ENCODE measurements at regions of chr10 and their contacts with region 1.

Region 1: GRCh38 chr10:101569838-101570766 is 18.0 kb downstream of the POLL start:
- DNase-seq: peak; percentile 86
- H3K4me3 Mint-ChIP-seq: peak overlapping the region; percentile 74
- H3K27ac Mint-ChIP-seq: no peak overlapping the region
- H3K4me1 Mint-ChIP-seq: peaks cover 20% of the 10 kb centered on the region
- H3K27me3 Mint-ChIP-seq: peaks cover 73% of the 10 kb centered on the region

Region 2: GRCh38 chr10:101214446-101215396 is 355.4 kb before region 1 on chr10:
- CTCF ChIA-PET with region 1: interaction called, 40 read pairs
- DNase-seq: peak; percentile 80
- H3K4me3 Mint-ChIP-seq: peak overlapping the region; percentile 33
- H3K27ac Mint-ChIP-seq: peak overlapping the region; percentile 1
- H3K4me1 Mint-ChIP-seq: peaks cover 35% of the 10 kb centered on the region
- H3K27me3 Mint-ChIP-seq: peaks cover 100% of the 10 kb centered on the region

Region 3: DNA sequence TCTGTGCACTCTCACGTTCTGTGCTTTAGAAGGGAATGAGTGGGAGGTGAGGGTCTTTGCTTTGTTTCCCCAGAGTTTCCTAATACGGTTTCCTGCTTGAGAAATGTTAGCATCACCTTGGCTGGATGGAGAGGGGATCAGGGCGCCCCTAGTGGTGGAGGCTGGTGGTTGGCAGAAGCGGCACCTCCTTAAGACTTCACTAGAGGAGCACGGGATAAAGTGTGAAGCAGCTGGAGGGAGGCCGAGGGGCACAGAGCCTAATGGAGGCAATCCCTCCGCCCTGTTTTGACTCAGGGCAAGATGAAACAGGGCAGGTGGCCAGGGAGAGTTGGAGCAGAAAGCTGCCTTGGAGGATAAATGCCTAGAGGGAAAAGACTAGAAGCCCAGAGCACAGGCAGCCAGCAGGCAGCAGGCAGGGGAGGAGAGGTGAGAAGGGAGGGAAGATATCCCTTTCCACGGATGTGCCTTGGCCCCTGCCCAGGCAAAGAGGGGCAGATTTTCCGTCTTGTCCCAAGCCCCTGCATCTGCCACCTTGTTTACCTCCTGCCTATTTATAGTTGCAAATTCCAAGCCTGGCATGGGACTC is 272.1 kb before region 1 on chr10:
- CTCF ChIA-PET with region 1: interaction called, 20 read pairs
- DNase-seq: peak; percentile 85
- H3K4me3 Mint-ChIP-seq: no peak overlapping the region
- H3K27ac Mint-ChIP-seq: no peak overlapping the region
- H3K4me1 Mint-ChIP-seq: no peaks in the 10 kb centered on the region
- H3K27me3 Mint-ChIP-seq: peaks cover 90% of the 10 kb centered on the region

Region 4: GRCh38 chr10:101536800-101537199 is 33.3 kb before region 1 on chr10:
- CTCF ChIA-PET with region 1: interaction called, 18 read pairs
- DNase-seq: no peak
- H3K4me3 Mint-ChIP-seq: no peak overlapping the region
- H3K27ac Mint-ChIP-seq: no peak overlapping the region
- H3K4me1 Mint-ChIP-seq: peaks cover 5% of the 10 kb centered on the region
- H3K27me3 Mint-ChIP-seq: no peaks in the 10 kb centered on the region

Region 5: DNA sequence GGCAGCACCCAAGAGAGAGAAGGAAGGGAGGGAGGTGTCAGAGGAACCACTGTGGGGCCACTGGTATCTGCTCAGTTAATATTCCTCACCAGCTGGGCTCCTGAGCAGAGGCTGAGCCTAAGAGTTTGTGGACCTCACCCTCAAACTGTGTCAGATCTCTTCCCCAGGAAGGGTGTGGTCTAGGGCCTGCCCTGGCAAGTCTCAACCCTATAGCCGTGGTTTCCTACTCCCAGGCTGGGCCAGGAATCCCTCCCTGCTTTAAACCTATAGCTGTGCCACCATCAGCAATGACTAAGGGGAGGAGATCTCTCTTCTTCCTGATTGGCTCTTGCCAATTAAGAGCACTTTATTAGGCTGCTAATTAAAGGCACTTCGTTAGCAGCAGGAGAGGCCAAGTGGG is 11.9 kb before region 1 on chr10:
- CTCF ChIA-PET with region 1: interaction called, 22 read pairs
- DNase-seq: peak; percentile 53
- H3K4me3 Mint-ChIP-seq: no peak overlapping the region
- H3K27ac Mint-ChIP-seq: peak overlapping the region; percentile 83
- H3K4me1 Mint-ChIP-seq: peaks cover 39% of the 10 kb centered on the region
- H3K27me3 Mint-ChIP-seq: peaks cover 16% of the 10 kb centered on the region

Region 6: GRCh38 chr10:101580486-101581399 is 10.6 kb after region 1 on chr10:
- CTCF ChIA-PET with region 1: interaction called, 10 read pairs
- DNase-seq: no peak
- H3K4me3 Mint-ChIP-seq: no peak overlapping the region
- H3K27ac Mint-ChIP-seq: no peak overlapping the region
- H3K4me1 Mint-ChIP-seq: no peaks in the 10 kb centered on the region
- H3K27me3 Mint-ChIP-seq: no peaks in the 10 kb centered on the region

Region 7: DNA sequence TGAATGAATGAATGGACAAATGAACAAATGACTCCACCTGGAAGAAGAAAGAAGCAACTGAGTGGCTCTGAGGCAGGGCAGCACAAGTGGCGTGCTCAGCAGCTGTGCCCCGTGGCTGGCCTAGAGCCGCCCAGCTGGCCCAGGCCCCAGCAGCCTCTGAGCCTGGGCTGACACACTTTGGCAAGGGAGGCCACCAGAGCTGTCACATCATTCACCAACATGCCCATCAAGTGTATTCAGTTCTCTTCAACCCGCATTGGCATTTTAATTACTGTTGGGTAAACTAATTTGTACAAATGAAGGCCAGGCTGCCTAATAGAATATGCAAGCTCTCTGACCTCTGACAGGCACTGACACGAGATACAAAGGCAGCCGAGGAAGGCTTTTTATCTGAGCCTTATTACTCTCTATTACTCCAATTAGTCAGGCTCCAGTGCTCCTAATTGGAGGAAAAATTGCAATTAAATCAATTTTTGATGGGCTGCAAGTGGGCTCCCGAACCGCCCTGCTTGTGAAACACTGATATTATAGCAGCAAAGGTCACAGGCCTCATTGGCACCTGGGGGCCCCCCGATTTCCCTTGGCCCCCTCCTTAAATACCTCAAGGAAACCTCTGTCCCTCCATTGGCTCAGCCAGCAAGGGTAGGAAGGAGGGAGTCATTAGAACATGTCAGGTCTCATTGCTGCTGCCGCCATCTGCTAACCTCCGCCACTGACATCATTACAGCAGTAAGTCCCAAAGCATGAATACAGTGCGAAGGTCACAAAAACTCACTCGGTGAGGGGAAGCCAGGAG is 59.9 kb after region 1 on chr10:
- CTCF ChIA-PET with region 1: no interaction called
- DNase-seq: no peak
- H3K4me3 Mint-ChIP-seq: no peak overlapping the region
- H3K27ac Mint-ChIP-seq: no peak overlapping the region
- H3K4me1 Mint-ChIP-seq: no peaks in the 10 kb centered on the region
- H3K27me3 Mint-ChIP-seq: no peaks in the 10 kb centered on the region

Region 8: GRCh38 chr10:101655570-101655969 is 85.5 kb after region 1 on chr10:
- CTCF ChIA-PET with region 1: no interaction called
- DNase-seq: no peak
- H3K4me3 Mint-ChIP-seq: no peak overlapping the region
- H3K27ac Mint-ChIP-seq: no peak overlapping the region
- H3K4me1 Mint-ChIP-seq: no peaks in the 10 kb centered on the region
- H3K27me3 Mint-ChIP-seq: no peaks in the 10 kb centered on the region